ENCODE measurements at regions of chr17 and their contacts with region 1.

Region 1: DNA sequence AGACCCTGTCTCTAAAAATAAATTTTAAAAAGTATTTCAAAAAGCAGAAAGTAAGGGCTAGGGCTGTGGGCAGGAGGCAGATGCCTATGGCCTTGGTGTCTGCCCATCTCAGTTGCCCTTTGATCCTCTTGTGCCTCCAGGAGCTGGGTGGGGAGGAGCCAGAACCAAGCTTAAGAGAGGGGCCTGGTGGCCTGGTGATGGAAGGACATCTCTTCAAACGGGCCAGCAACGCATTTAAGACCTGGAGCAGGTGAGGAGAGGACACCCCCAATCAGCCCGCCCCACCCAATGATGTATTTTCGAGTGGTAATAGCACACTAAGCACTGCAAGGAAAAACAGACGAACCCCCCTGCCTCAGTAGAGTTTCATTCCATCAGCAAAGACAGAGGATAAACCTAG is 7.6 kb upstream of the KCTD11 start:
- DNase-seq: no peak
- ATAC-seq: no peak
- H3K4me3 Mint-ChIP-seq: no peak overlapping the region
- H3K27ac Mint-ChIP-seq: peak overlapping the region; percentile 71
- H3K4me1 Mint-ChIP-seq: peaks cover 29% of the 10 kb centered on the region
- H3K27me3 Mint-ChIP-seq: no peaks in the 10 kb centered on the region

Region 2: DNA sequence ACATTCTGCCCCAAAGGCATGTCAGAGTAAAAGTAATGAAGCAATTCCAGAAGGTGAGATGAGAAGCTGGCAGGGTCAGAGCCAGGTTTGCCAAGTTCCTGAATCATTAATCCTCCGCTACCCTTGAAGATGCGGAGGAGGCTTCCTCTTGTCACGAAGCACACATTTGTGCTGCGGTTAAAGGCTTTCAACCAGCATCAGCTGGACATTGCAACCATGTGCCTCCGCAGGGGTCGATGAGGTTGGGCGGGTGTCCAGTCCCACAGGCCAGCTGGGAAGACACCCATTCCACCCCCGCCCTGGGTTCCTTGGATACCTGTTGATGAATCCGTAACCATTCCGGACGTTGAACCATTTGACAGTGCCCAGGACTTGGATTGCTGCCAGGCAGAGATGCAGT is 51.2 kb before region 1 on chr17:
- POLR2A ChIA-PET with region 1: no interaction called
- DNase-seq: no peak
- ATAC-seq: no peak
- H3K4me3 Mint-ChIP-seq: peak overlapping the region; percentile 35
- H3K27ac Mint-ChIP-seq: no peak overlapping the region
- H3K4me1 Mint-ChIP-seq: peaks cover 20% of the 10 kb centered on the region
- H3K27me3 Mint-ChIP-seq: peaks cover 43% of the 10 kb centered on the region

Region 3: DNA sequence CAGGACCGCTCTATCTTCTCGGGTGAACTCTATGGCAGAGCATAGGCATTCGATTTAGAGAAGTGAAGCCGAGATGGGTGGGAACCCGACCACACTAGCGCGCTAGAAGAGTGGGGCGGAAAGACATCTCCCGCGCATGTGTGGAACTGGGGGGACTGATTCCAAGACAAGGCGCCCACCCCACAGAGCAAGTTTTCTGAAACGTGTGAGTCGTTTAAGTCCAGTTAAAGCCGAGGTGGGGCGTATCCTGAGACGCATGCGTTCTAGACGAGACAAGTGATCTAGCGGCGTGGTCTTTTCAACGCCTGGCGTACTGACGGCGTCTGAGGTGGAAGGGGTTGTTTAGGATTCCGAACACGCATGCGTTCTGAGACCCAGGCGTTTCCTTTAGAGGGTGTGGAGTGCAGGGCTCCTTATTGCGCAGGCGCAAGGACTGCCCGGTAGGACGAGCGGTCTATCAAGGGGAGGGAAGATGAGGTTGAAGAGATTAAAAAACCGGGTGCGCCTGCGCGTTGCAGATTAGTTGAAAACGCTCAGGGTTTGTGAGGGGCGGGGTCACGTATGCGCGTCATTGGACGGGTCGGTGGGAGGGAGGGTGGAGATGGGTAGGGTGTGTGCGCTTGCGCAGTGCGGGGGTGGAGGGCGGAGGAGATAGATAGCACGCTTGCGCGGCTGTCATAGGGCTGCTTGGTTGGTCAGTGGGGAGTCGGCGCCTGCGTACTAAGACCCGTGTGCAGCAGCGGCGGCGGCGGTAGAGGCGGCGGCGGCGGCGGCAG is 37.3 kb before region 1 on chr17 and contains the start of gene EIF5A:
- POLR2A ChIA-PET with region 1: interaction called, 11 read pairs
- DNase-seq: peak; percentile 99
- ATAC-seq: peak; percentile 81
- H3K4me3 Mint-ChIP-seq: peak within 1 kb of the TSS; percentile 89
- H3K27ac Mint-ChIP-seq: peak within 1 kb of the TSS; percentile 98
- H3K4me1 Mint-ChIP-seq: peaks cover 29% of the 10 kb centered on the region
- H3K27me3 Mint-ChIP-seq: no peaks in the 10 kb centered on the region
- total RNA-seq, gene EIF5A: 420 to 451 TPM

Region 4: DNA sequence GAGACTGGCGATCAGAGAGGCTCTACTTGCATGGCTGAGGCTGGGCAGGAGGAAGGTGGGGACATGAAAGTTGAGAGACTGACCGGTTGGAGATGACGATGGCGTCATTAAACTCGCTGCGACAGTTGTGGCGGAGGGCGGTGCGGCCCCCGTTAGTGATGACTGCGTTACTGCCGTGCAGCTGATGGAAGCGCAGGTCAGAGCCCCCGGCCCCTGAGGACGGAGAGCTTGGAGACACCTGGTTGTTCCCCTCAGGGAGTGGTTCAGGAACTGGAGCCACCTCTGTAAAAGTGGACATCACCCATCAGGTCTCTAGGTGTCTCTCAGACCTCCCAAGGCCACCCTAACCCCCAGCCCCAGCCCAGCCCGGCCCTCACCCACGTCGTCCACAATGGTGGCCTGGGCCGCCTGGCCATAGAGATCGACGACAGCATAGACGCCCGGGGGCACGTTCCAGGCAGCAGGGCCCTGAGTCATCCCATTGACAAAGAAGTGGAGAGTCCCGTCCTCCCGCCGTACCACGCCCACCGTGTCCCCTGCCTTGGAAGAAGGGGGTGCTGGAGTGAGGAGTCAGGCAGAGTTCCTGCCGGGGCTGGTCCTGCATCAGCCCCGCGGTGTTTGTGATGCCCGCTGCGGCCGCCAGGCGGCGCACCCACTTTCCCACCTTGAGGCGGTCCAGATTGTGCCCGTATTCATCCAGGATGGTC is 20.5 kb before region 1 on chr17:
- POLR2A ChIA-PET with region 1: interaction called, 22 read pairs
- DNase-seq: peak; percentile 82
- ATAC-seq: peak; percentile 55
- H3K4me3 Mint-ChIP-seq: no peak overlapping the region
- H3K27ac Mint-ChIP-seq: peak overlapping the region; percentile 21
- H3K4me1 Mint-ChIP-seq: peaks cover 13% of the 10 kb centered on the region
- H3K27me3 Mint-ChIP-seq: no peaks in the 10 kb centered on the region

Region 5: GRCh38 chr17:7329374-7329996 is 14.9 kb before region 1 on chr17:
- POLR2A ChIA-PET with region 1: interaction called, 22 read pairs
- DNase-seq: peak; percentile 94
- ATAC-seq: peak; percentile 59
- H3K4me3 Mint-ChIP-seq: peak overlapping the region; percentile 88
- H3K27ac Mint-ChIP-seq: peak overlapping the region; percentile 93
- H3K4me1 Mint-ChIP-seq: peaks cover 26% of the 10 kb centered on the region
- H3K27me3 Mint-ChIP-seq: no peaks in the 10 kb centered on the region

Region 6: DNA sequence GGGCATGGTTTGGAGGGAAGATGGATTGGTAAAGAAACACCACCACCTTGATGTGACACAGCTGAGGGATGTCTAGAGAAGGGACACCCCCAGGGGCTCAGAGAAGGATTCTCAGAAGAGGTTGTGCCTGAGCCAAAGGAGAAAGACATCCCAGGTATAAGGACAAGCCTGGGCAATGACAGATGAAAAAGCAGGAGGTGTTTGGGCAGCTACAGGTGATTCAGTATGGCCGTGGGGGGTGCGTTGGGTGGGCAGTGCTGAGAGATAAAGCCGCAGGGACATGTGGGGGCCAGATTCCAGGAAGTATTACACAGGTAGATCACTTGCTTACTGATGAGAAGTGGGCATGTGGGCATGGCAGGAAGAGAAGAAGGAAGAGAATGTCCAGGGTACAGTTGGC is 17.5 kb after region 1 on chr17:
- POLR2A ChIA-PET with region 1: no interaction called
- DNase-seq: no peak
- ATAC-seq: no peak
- H3K4me3 Mint-ChIP-seq: no peak overlapping the region
- H3K27ac Mint-ChIP-seq: no peak overlapping the region
- H3K4me1 Mint-ChIP-seq: peaks cover 5% of the 10 kb centered on the region
- H3K27me3 Mint-ChIP-seq: peaks cover 5% of the 10 kb centered on the region